Calu3 (cell line): ENCODE measurements at regions of chr18 and their contacts with region 1.

Region 1: GRCh38 chr18:6566338-6566911 is 151.7 kb upstream of the L3MBTL4 start:
- DNase-seq: no peak
- H3K4me3 Mint-ChIP-seq: no peak overlapping the region
- H3K27ac Mint-ChIP-seq: no peak overlapping the region
- H3K4me1 Mint-ChIP-seq: no peaks in the 10 kb centered on the region
- H3K27me3 Mint-ChIP-seq: peaks cover 25% of the 10 kb centered on the region
- CTCF ChIP-seq: no peak

Region 2: DNA sequence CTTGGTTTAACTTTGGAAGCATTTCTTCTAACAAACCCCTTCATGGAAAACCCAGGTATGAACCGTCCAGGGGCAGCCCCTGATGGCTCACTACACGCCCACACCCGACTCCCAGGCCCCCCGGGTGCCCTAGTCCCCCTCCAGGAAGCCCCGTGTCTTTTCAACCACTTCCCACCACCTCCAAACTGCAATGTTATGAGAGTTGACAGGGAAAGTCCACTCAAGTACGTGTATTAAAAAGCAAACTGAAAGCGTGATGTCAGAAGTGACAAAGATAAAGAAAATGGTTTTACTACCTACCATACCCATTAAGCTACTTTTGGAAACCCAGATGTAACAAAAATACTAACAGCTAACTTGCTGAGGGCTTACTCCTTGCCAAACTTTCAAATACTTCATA is 203.2 kb before region 1 on chr18:
- CTCF ChIA-PET with region 1: no interaction called
- intact Hi-C with region 1: no loop called
- DNase-seq: no peak
- H3K4me3 Mint-ChIP-seq: no peak overlapping the region
- H3K27ac Mint-ChIP-seq: no peak overlapping the region
- H3K4me1 Mint-ChIP-seq: no peaks in the 10 kb centered on the region
- H3K27me3 Mint-ChIP-seq: peaks cover 15% of the 10 kb centered on the region
- CTCF ChIP-seq: no peak

Region 3: DNA sequence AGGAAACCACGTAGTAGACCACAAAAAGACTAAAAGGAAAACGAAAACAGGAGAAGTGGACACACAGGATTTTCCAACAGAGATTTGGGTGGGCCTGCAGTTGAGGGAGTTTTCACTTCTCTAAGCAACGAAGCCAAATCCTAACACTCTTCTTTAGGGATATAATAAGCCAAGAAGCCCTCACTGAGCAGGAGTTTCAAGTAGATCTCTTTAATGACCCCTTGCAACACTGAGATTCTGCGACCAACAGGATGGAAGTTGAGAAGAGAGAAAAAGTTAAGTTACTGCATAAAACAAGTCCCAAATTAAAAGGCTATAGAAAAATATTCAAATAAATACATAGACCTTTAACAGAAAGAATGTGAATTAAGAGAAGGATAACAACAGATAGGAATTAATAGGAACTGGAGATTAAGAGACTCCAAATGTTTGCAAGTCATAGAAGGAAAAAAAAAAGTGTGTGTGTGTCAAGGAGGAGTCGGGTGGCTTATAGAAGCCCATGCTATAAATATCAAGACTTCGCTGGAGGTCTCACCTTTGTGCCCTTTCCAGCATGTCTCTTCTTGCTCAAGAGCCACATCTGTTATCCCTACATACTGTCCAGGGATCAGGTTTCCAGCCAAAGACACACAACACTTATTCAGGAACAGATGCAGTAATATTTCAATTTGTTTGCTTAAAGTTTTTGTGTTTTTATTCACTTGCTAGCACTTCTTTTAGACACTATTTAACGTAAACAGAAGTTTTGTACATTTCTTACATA is 93.7 kb after region 1 on chr18:
- CTCF ChIA-PET with region 1: no interaction called
- intact Hi-C with region 1: loop called (anchors 5 kb)
- DNase-seq: no peak
- H3K4me3 Mint-ChIP-seq: no peak overlapping the region
- H3K27ac Mint-ChIP-seq: no peak overlapping the region
- H3K4me1 Mint-ChIP-seq: no peaks in the 10 kb centered on the region
- H3K27me3 Mint-ChIP-seq: peaks cover 35% of the 10 kb centered on the region
- CTCF ChIP-seq: no peak